ENCODE measurements at regions of chr7 and their contacts with region 1.

Region 1: GRCh38 chr7:90155206-90155605 is 937 bp downstream of the STEAP1 start:
- DNase-seq: no peak
- ATAC-seq: no peak
- H3K4me3 ChIP-seq: no peak overlapping the region
- H3K4me3 Mint-ChIP-seq: no peak overlapping the region
- H3K27ac ChIP-seq: no peak overlapping the region
- H3K27ac Mint-ChIP-seq: no peak overlapping the region
- H3K4me1 ChIP-seq: peaks cover 3 to 5% of the 10 kb centered on the region in 2 donors
- H3K4me1 Mint-ChIP-seq: peaks cover 4% of the 10 kb centered on the region
- H3K27me3 ChIP-seq: peaks cover 0 to 16% (median 5%) of the 10 kb centered on the region in 4 experiments
- H3K27me3 Mint-ChIP-seq: peaks cover 25% of the 10 kb centered on the region
- CTCF ChIP-seq: no peak

Region 2: GRCh38 chr7:90165724-90166123 is 10.5 kb after region 1 on chr7:
- CTCF ChIA-PET with region 1: interaction called, 10 read pairs
- POLR2A ChIA-PET with region 1: no interaction called
- intact Hi-C with region 1: no loop called
- DNase-seq: no peak
- ATAC-seq: no peak
- H3K4me3 ChIP-seq: no peak overlapping the region
- H3K4me3 Mint-ChIP-seq: no peak overlapping the region
- H3K27ac ChIP-seq: no peak overlapping the region
- H3K27ac Mint-ChIP-seq: no peak overlapping the region
- H3K4me1 ChIP-seq: no peaks in the 10 kb centered on the region
- H3K4me1 Mint-ChIP-seq: no peaks in the 10 kb centered on the region
- H3K27me3 ChIP-seq: peaks cover 0 to 2% (median 0%) of the 10 kb centered on the region in 4 experiments
- H3K27me3 Mint-ChIP-seq: peaks cover 12% of the 10 kb centered on the region
- CTCF ChIP-seq: no peak

Region 3: DNA sequence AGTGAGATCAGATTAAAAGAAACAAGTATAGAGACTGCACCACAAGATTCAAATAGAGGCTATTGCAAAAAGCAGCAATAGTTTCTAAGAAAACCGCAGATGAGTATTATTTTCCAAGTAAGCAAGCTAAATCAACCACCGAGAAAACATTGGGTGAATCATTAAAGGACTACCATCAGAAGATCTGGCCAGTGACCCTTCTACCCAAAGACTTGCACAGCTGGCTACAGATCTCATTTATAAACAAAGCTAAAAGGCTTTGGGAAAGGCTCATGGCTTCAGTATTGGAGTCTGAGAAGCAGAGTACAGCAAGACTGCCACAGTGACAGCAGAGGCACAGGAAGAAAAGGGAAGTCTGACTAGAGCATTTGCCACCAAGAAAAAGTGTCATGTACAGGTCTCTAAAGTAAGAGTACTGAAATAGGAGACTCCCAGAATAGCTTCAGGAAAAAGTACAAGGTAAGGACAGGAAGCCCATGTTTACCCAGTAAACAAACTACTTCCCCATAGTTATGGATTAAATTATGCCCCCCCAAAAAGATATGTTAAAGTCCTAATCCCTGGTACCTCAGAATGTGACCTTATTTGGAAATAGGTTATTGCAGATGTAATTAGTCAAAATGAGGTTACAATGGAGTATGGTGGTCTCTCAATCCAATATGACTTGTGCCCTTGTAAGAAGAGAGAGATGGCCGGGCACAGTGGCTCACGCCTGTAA is 18.1 kb after region 1 on chr7:
- CTCF ChIA-PET with region 1: interaction called, 10 read pairs
- POLR2A ChIA-PET with region 1: no interaction called
- intact Hi-C with region 1: no loop called
- DNase-seq: no peak
- ATAC-seq: no peak
- H3K4me3 ChIP-seq: no peak overlapping the region
- H3K4me3 Mint-ChIP-seq: no peak overlapping the region
- H3K27ac ChIP-seq: no peak overlapping the region
- H3K27ac Mint-ChIP-seq: no peak overlapping the region
- H3K4me1 ChIP-seq: no peaks in the 10 kb centered on the region
- H3K4me1 Mint-ChIP-seq: peaks cover 2% of the 10 kb centered on the region
- H3K27me3 ChIP-seq: no peaks in the 10 kb centered on the region
- H3K27me3 Mint-ChIP-seq: peaks cover 16% of the 10 kb centered on the region
- CTCF ChIP-seq: no peak

Region 4: DNA sequence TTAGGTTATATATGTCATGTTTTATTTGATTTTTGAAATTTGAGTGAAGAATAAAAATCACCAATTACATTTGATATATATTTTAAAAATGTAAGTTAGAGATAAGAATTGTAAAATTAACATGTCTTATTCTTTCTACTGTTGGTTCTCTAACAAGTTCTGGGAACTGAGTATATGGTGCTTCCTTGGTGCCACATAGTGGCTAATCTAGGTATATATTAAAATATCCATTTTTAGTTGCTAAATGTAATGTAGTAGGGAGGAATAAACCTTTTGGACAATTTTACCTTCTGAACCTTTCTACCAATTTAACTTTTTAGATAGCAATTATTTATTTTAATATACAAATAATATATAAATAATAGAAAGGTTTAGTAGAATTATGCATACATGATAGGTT is 107.2 kb after region 1 on chr7:
- CTCF ChIA-PET with region 1: interaction called, 13 read pairs
- POLR2A ChIA-PET with region 1: no interaction called
- intact Hi-C with region 1: loop called (anchors 1 kb)
- DNase-seq: peak; percentile 14
- ATAC-seq: peak; percentile 43
- H3K4me3 ChIP-seq: no peak overlapping the region
- H3K4me3 Mint-ChIP-seq: no peak overlapping the region
- H3K27ac ChIP-seq: no peak overlapping the region
- H3K27ac Mint-ChIP-seq: no peak overlapping the region
- H3K4me1 ChIP-seq: no peaks in the 10 kb centered on the region
- H3K4me1 Mint-ChIP-seq: no peaks in the 10 kb centered on the region
- H3K27me3 ChIP-seq: no peaks in the 10 kb centered on the region
- H3K27me3 Mint-ChIP-seq: peaks cover 18% of the 10 kb centered on the region
- CTCF ChIP-seq: peak; percentile 69

Region 5: GRCh38 chr7:90412458-90413184 is 257.4 kb after region 1 on chr7:
- CTCF ChIA-PET with region 1: interaction called, 6 read pairs
- POLR2A ChIA-PET with region 1: no interaction called
- intact Hi-C with region 1: loop called (anchors 5 kb)
- DNase-seq: peak; percentile 28
- ATAC-seq: peak; percentile 58
- H3K4me3 ChIP-seq: no peak overlapping the region
- H3K4me3 Mint-ChIP-seq: no peak overlapping the region
- H3K27ac ChIP-seq: no peak overlapping the region
- H3K27ac Mint-ChIP-seq: no peak overlapping the region
- H3K4me1 ChIP-seq: no peaks in the 10 kb centered on the region
- H3K4me1 Mint-ChIP-seq: no peaks in the 10 kb centered on the region
- H3K27me3 ChIP-seq: no peaks in the 10 kb centered on the region
- H3K27me3 Mint-ChIP-seq: no peaks in the 10 kb centered on the region
- CTCF ChIP-seq: no peak

Region 6: GRCh38 chr7:90424720-90425119 is 269.5 kb after region 1 on chr7:
- CTCF ChIA-PET with region 1: interaction called, 96 read pairs
- POLR2A ChIA-PET with region 1: no interaction called
- intact Hi-C with region 1: loop called (anchors 1 kb)
- DNase-seq: no peak
- ATAC-seq: no peak
- H3K4me3 ChIP-seq: no peak overlapping the region
- H3K4me3 Mint-ChIP-seq: no peak overlapping the region
- H3K27ac ChIP-seq: no peak overlapping the region
- H3K27ac Mint-ChIP-seq: no peak overlapping the region
- H3K4me1 ChIP-seq: no peaks in the 10 kb centered on the region
- H3K4me1 Mint-ChIP-seq: no peaks in the 10 kb centered on the region
- H3K27me3 ChIP-seq: no peaks in the 10 kb centered on the region
- H3K27me3 Mint-ChIP-seq: peaks cover 3% of the 10 kb centered on the region
- CTCF ChIP-seq: no peak

Measured in B cell (primary cell).